ENCODE measurements at regions of chr18 and their contacts with region 1.

Region 1: DNA sequence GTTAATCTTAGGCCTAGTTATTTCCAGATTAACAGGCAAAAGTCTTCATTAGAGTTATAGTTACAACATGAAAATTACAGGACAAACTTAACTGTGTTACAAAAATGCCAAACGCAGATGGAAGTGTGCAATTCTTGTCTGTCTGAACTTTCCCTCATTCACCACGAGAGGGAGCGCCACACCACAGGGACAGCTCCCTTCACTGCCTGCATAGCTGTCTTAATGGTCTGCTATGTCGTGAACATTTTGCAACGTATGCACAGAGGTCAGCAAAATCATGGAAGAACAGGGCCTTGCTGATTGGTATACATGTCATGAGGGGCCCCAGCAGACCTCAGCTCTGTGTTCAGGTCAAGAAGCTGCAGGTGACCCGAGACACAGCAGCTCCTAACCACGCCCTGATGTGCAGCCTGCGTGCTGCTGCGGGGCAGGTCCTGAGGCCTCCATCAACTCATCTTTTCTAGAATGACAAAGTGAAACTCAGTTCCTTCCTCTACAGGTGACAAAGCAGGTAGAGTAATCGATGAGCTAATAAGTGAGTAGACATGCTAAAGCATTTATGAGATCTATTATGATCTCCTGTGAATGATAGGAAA is 78.8 kb upstream of the ATP8B1 start:
- DNase-seq: peak; percentile 94
- H3K4me3 Mint-ChIP-seq: no peak overlapping the region
- H3K27ac Mint-ChIP-seq: no peak overlapping the region
- H3K4me1 Mint-ChIP-seq: peaks cover 5% of the 10 kb centered on the region
- H3K27me3 Mint-ChIP-seq: no peaks in the 10 kb centered on the region
- CTCF ChIP-seq: peak; percentile 87

Region 2: DNA sequence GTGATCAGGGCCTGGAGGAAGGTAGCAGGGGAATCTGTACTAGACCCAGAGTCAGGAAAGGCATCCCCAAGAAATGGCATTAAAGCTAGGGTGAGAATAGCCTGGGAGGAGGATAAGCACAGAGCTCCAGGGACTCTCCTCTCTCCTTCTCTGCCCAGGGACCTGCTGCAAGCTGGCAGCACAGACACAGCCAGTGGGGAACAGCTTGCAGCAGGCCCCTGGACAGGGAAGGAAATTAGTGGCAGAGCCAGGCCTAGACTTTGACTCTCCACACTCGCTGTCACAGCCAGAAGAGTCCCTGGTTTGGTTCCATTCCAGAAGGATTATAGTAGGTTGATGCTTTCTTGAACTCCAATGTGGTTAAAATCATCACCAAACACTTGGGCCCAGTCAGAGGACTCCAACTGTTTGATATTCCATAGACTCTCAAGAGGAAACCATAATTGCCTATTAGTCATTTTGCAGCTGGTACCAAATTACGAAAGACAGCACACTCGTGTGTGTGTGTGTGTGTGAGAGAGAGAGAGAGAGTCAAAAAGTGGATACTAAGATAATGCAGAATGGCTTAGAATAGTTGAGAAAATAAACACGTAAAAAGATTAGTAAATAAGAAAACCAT is 16.7 kb after region 1 on chr18:
- CTCF ChIA-PET with region 1: interaction called, 33 read pairs
- POLR2A ChIA-PET with region 1: interaction called, 3 read pairs
- intact Hi-C with region 1: no loop called
- DNase-seq: peak; percentile 73
- H3K4me3 Mint-ChIP-seq: no peak overlapping the region
- H3K27ac Mint-ChIP-seq: no peak overlapping the region
- H3K4me1 Mint-ChIP-seq: peaks cover 27% of the 10 kb centered on the region
- H3K27me3 Mint-ChIP-seq: no peaks in the 10 kb centered on the region
- CTCF ChIP-seq: no peak

Region 3: DNA sequence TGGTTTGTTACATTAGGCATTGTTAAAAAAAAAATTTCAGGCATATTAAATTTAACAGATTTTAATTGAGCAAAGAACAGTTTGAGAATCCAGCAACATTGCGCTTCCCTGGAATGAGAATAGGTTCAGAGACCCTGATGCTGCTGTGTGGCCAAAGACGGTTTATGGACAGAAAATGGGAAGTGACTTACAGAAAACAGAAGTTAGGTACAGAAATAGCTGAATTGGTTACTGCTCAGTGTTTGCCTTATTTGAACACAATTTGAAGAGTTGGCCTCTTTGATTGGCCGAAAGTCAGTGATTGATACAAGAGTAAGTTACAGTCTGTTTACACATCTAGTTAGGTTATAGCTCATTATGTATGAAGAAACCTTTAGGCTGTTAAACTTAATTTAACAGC is 156.1 kb after region 1 on chr18:
- CTCF ChIA-PET with region 1: interaction called, 27 read pairs
- POLR2A ChIA-PET with region 1: interaction called, 4 read pairs
- intact Hi-C with region 1: loop called (anchors 1 kb)
- DNase-seq: no peak
- H3K4me3 Mint-ChIP-seq: no peak overlapping the region
- H3K27ac Mint-ChIP-seq: no peak overlapping the region
- H3K4me1 Mint-ChIP-seq: no peaks in the 10 kb centered on the region
- H3K27me3 Mint-ChIP-seq: no peaks in the 10 kb centered on the region
- CTCF ChIP-seq: no peak

Region 4: DNA sequence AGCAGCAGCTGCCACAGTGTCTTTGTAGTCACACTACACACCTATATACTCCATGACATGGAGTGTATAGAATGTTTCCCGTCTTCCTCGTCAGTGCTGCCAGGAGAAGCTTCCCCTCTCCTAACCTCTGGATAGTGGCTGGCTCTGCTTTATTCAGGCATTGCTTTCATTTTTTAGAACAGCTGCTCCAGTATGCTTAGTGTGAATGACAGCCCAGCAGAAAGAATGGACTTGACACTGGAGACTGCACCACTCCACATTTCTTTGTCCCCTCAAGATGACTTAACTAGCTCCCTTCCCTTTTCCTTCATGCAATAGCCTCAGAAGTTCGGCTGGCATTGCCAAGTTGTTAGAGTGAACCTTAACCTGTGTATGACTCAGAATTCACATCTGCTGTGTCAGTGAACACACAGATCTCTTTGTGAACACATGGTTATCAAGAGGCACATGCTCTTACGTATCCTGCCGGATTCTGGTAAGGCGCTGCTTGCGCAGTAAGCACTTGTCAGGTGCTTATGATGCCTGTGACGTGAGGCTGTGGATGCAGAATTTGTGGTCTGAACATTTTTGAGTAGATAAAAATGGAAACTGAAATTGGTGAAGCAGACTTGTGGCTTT is 236.0 kb after region 1 on chr18:
- CTCF ChIA-PET with region 1: interaction called, 16 read pairs
- POLR2A ChIA-PET with region 1: interaction called, 10 read pairs
- intact Hi-C with region 1: loop called (anchors 1 kb)
- DNase-seq: peak; percentile 82
- H3K4me3 Mint-ChIP-seq: peak overlapping the region; percentile 1
- H3K27ac Mint-ChIP-seq: peak overlapping the region; percentile 86
- H3K4me1 Mint-ChIP-seq: peaks cover 20% of the 10 kb centered on the region
- H3K27me3 Mint-ChIP-seq: no peaks in the 10 kb centered on the region
- CTCF ChIP-seq: no peak

Region 5: DNA sequence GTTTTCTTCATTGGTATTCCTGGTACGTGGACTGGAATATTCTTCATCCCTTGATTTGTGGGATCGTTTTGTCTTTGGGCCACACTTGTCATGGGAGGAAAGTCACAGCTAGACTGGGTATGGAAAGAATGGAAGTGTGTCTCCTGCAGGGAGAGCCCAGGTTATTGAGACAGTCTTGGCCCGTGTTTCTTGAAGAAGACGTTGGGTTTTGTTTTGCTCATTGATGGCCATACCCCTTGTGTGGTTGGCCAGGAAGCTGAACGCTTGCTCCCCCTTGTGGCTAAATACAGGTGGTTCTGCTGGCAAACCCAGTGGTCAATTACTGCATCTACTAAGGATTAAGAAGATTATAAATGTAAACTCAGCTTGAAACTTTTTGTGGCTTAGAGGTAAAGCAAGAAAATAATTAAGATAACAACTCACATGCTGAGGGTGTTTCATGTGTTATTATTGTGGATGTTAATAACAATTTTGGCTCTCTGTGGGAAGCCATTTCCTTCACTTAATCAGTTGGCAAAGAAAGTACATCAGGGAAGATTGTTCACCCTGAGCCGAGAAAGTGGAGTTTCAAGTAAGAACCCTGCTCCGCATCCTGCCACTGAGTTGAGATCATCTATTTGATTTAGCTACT is 253.9 kb after region 1 on chr18:
- CTCF ChIA-PET with region 1: interaction called, 11 read pairs
- POLR2A ChIA-PET with region 1: no interaction called
- intact Hi-C with region 1: loop called (anchors 1 kb)
- DNase-seq: peak; percentile 85
- H3K4me3 Mint-ChIP-seq: no peak overlapping the region
- H3K27ac Mint-ChIP-seq: no peak overlapping the region
- H3K4me1 Mint-ChIP-seq: peaks cover 3% of the 10 kb centered on the region
- H3K27me3 Mint-ChIP-seq: no peaks in the 10 kb centered on the region
- CTCF ChIP-seq: peak; percentile 64